ENCODE measurements at regions of chr4 and their contacts with region 1.

Region 1: DNA sequence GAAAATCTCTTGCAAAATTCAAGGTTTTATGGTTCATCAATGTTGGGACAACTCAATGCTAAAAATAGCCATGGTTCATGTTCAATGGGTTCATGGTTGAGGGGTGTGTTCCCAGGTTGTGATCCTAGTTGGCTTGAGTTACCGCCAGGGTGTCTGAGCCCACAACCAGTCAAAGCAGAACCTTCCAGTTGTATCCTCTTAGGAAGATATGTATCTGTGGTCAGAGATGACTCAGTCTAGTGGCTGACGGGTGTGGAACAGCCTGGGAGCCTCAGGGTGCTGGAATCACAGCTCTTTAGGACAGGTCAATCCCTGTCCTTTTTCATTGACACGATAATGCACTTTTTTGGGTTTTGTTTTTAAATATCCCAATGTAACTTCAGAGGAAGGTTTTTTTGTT is 192.3 kb upstream of the NR3C2 start:
- DNase-seq: no peak
- ATAC-seq: no peak

Region 2: GRCh38 chr4:148239494-148239985 is 394.9 kb before region 1 on chr4:
- intact Hi-C with region 1: no loop called
- DNase-seq: peak; percentile 47
- ATAC-seq: peak; percentile 29

Region 3: DNA sequence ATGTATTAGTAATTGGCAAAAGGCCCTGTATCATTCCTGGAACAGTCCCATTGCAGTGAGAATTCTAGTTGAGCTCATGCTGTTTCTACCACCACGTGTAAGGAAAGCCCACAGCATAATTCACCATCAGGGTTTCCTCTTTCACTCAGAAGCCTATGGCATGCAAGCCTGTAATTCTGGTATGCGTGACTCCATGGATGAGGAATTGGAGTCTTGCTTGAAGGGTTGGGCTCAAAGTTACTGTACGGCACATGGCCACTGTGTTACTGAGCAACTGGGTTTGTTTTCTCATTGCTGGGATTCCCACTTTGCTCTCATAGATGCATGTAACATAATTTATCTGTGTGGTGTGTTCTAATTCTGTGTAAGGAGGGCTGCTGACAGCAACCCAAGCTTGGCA is 60.0 kb before region 1 on chr4:
- intact Hi-C with region 1: no loop called
- DNase-seq: no peak
- ATAC-seq: peak; percentile 38

Region 4: GRCh38 chr4:148901075-148901705 is 266.7 kb after region 1 on chr4:
- intact Hi-C with region 1: loop called (anchors 10 kb)
- DNase-seq: no peak
- ATAC-seq: no peak